H1 (cell line): ENCODE measurements at regions of chr7 and their contacts with region 1.

Region 1: DNA sequence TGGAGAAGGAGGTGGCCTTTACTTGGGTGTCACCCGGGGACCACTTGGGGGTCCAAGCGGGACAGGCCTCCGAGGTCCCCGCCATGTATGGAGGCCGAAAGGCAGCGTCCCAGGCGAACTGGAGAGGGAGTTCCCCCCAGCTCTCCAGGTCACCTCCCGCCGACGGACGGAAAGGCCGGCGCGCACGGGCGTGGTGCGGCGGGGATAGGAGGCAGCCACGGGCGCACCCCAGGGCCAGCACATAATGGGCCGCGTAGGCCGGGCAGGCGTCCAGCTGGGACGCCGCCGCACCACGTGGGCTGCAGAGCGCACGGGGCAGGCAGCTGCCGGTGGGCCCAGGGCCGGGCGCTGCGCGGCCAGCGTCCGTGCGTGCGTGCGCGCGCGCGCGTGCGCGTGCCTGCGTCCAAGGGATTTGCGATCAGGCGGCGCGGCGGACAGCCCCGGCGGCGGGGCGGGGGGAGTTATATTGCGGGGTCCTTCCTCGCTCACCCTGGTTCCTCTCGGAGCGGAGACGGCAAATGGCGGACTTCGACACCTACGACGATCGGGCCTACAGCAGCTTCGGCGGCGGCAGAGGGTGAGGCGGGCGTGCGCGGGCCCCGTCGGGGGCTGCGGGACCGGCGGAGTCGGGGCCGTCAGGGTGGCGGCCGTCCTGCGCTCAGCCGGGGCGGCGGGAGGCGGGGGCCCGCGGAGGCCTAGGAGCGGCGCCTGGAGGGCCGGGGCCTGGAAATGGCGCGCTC is at the start of gene EIF4H:
- DNase-seq: peak; percentile 84 to 100
- H3K4me3 ChIP-seq: peak within 1 kb of the TSS; percentile 67 to 97 (median 80)
- H3K27ac ChIP-seq: peak within 1 kb of the TSS; percentile 94
- H3K4me1 ChIP-seq: peaks cover 2 to 14% (median 6%) of the 10 kb centered on the region in 4 experiments; a peak in 6 of 7 replicates
- H3K27me3 ChIP-seq: no peaks in the 10 kb centered on the region
- CTCF ChIP-seq: no peak; a peak in 1 of 4 replicates
- EP300 ChIP-seq: no peak
- POLR2A ChIP-seq: peak; percentile 91 to 95
- RAD21 ChIP-seq: no peak
- total RNA-seq, gene EIF4H: 359 and 382 TPM in 2 replicates

Region 2: GRCh38 chr7:74043523-74043951 is 130.5 kb before region 1 on chr7:
- CTCF ChIA-PET with region 1: no interaction called
- POLR2A ChIA-PET with region 1: no interaction called
- DNase-seq: no peak
- H3K4me3 ChIP-seq: peak overlapping the region in 1 of 4 experiments; percentile 26; a peak in 1 of 8 replicates
- H3K27ac ChIP-seq: peak overlapping the region; percentile 52; the same call in 1 of the 2 replicates
- H3K4me1 ChIP-seq: peaks cover 0 to 22% (median 18%) of the 10 kb centered on the region in 4 experiments; a peak in 6 of 7 replicates
- H3K27me3 ChIP-seq: no peaks in the 10 kb centered on the region
- CTCF ChIP-seq: no peak
- EP300 ChIP-seq: peak in 1 of 2 experiments; percentile 49; a peak in 1 of 3 replicates
- POLR2A ChIP-seq: 0 out of 3 replicates have a peak, but pooled peaks of 1 of the 2 experiments have one; percentile 29
- RAD21 ChIP-seq: no peak

Region 3: GRCh38 chr7:74068393-74069085 is 105.5 kb before region 1 on chr7:
- CTCF ChIA-PET with region 1: interaction called, 30 read pairs
- POLR2A ChIA-PET with region 1: interaction called, 5 read pairs
- DNase-seq: no peak
- H3K4me3 ChIP-seq: no peak overlapping the region
- H3K27ac ChIP-seq: no peak overlapping the region
- H3K4me1 ChIP-seq: peaks cover 0 to 11% (median 3%) of the 10 kb centered on the region in 4 experiments; a peak in 3 of 7 replicates
- H3K27me3 ChIP-seq: no peaks in the 10 kb centered on the region
- CTCF ChIP-seq: no peak
- EP300 ChIP-seq: no peak
- POLR2A ChIP-seq: no peak
- RAD21 ChIP-seq: no peak

Region 4: GRCh38 chr7:74094224-74095101 is 79.6 kb before region 1 on chr7:
- CTCF ChIA-PET with region 1: interaction called, 4 read pairs
- POLR2A ChIA-PET with region 1: interaction called, 11 read pairs
- DNase-seq: peak; percentile 79 to 87
- H3K4me3 ChIP-seq: peak overlapping the region; percentile 1 to 51 (median 20); a peak in 6 of 8 replicates
- H3K27ac ChIP-seq: peak overlapping the region; percentile 52; the same call in 1 of the 2 replicates
- H3K4me1 ChIP-seq: peaks cover 8 to 31% (median 26%) of the 10 kb centered on the region in 4 experiments
- H3K27me3 ChIP-seq: no peaks in the 10 kb centered on the region
- CTCF ChIP-seq: no peak
- EP300 ChIP-seq: no peak
- POLR2A ChIP-seq: 0 out of 3 replicates have a peak, but pooled peaks of 1 of the 2 experiments have one; percentile 36
- RAD21 ChIP-seq: peak in 1 of 2 experiments; percentile 14; a peak in 1 of 4 replicates

Region 5: GRCh38 chr7:74153758-74154157 is 20.3 kb before region 1 on chr7:
- CTCF ChIA-PET with region 1: no interaction called
- POLR2A ChIA-PET with region 1: interaction called, 11 read pairs
- DNase-seq: no peak
- H3K4me3 ChIP-seq: no peak overlapping the region
- H3K27ac ChIP-seq: no peak overlapping the region
- H3K4me1 ChIP-seq: no peaks in the 10 kb centered on the region
- H3K27me3 ChIP-seq: no peaks in the 10 kb centered on the region
- CTCF ChIP-seq: no peak
- EP300 ChIP-seq: no peak
- POLR2A ChIP-seq: no peak
- RAD21 ChIP-seq: no peak

Region 6: DNA sequence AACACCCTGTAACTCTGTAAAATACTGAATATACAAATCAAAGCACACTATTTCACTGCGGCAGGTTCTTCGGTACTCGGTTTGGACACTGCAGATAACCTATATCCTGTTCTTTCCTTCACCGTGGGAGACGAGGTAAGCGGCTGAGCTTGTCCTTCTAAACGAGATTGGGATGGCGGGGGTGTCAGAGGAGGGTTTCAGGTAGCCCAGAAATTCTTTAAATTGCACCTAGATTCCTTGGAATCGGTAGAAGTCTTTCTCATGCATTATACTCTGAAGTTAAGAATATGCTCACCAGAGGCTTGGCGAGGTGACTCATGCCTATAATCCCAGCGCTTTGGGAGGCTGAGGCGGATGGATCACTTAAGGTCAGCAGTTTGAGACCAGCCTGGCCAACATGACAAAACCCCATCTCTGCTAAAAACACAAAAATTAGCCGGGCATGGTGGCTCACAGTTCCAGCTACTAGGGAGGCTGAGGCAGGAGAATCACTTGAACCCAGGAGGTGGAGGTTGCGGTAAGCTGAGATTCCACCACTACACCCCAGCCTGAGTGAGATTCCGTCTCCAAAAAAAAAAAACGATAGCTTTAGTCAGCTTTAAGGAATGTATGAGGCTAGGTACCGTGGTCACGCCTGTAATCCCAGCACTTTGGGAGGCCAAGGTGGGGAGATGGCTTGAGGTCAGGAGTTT is 25.7 kb after region 1 on chr7:
- CTCF ChIA-PET with region 1: interaction called, 15 read pairs
- POLR2A ChIA-PET with region 1: interaction called, 17 read pairs
- DNase-seq: no peak
- H3K4me3 ChIP-seq: no peak overlapping the region
- H3K27ac ChIP-seq: no peak overlapping the region
- H3K4me1 ChIP-seq: no peaks in the 10 kb centered on the region
- H3K27me3 ChIP-seq: no peaks in the 10 kb centered on the region
- CTCF ChIP-seq: no peak
- EP300 ChIP-seq: no peak
- POLR2A ChIP-seq: no peak
- RAD21 ChIP-seq: no peak